ENCODE measurements at regions of chr10 and their contacts with region 1.

Region 1: GRCh38 chr10:69957886-69958555 is 94.6 kb upstream of the MACROH2A2 start:
- DNase-seq: peak; percentile 34
- ATAC-seq: peak; percentile 82
- H3K4me3 Mint-ChIP-seq: no peak overlapping the region
- H3K27ac Mint-ChIP-seq: no peak overlapping the region
- H3K4me1 Mint-ChIP-seq: peaks cover 2% of the 10 kb centered on the region
- H3K27me3 Mint-ChIP-seq: peaks cover 10% of the 10 kb centered on the region
- CTCF ChIP-seq: peak; percentile 60

Region 2: GRCh38 chr10:69703766-69704638 is 254.0 kb before region 1 on chr10:
- CTCF ChIA-PET with region 1: no interaction called
- POLR2A ChIA-PET with region 1: no interaction called
- DNase-seq: no peak
- ATAC-seq: no peak
- H3K4me3 Mint-ChIP-seq: no peak overlapping the region
- H3K27ac Mint-ChIP-seq: no peak overlapping the region
- H3K4me1 Mint-ChIP-seq: 0 out of 2 replicates have a peak, but pooled peaks cover 5% of the 10 kb centered on the region
- H3K27me3 Mint-ChIP-seq: peaks cover 36% of the 10 kb centered on the region
- CTCF ChIP-seq: no peak

Region 3: DNA sequence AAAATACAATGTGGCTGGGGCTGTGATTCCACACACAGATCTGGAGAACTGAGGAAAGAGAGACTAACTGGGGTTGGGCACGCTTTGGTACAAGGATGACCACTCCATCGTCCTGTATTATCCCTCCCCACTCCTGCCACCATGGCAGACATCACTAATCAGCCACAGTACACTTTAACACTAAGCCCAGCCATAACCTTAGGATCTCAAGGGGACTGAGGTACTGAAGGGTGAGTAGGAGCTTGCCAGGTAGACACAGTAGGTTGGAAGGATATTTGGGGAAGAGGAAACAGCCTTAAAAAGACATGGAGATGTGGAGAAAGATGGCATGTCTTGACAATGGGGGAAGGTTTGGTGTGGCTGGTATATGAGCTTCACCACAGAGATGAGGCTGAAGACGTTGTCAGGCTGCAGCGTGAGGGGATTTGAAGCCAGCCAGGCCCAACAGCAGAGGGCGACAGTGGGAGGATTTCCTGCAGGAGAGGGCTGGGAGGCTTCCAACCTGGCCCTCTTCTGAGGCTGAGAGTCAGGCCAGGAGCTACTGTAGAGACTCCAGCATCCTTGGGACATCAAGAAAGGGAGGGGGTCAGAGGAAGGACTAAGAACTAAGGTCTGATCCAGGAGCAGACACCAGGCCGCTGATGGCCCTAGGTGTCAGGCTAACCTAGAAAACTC is 215.0 kb before region 1 on chr10:
- CTCF ChIA-PET with region 1: interaction called, 21 read pairs
- POLR2A ChIA-PET with region 1: no interaction called
- DNase-seq: peak; percentile 79
- ATAC-seq: peak; percentile 92
- H3K4me3 Mint-ChIP-seq: no peak overlapping the region
- H3K27ac Mint-ChIP-seq: no peak overlapping the region
- H3K4me1 Mint-ChIP-seq: 0 out of 2 replicates have a peak, but pooled peaks cover 6% of the 10 kb centered on the region
- H3K27me3 Mint-ChIP-seq: peaks cover 4% of the 10 kb centered on the region
- CTCF ChIP-seq: 0 out of 2 replicates have a peak, but pooled peaks have one; percentile 28

Region 4: DNA sequence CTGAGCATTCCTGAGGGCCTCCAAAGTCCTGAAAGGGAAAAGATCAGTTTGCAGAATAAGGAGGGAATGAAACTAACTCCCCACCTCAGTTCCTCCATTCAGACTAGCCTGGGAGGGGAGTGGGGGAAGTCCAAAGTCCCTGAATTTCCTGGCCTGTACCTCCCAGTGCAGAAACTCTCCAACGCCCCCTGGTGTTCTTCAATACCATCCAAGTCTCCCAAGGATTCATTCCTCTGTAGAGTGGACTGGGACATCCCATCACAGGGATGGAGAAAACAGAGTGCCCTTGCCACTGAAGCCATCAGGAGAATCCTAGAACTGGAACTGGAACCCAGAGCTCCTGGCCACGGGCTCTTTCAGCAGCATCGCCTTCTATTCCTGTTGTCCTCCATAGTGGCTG is 157.9 kb before region 1 on chr10:
- CTCF ChIA-PET with region 1: interaction called, 11 read pairs
- POLR2A ChIA-PET with region 1: no interaction called
- DNase-seq: peak; percentile 72
- ATAC-seq: peak; percentile 58
- H3K4me3 Mint-ChIP-seq: no peak overlapping the region; the same call in 1 of the 2 replicates
- H3K27ac Mint-ChIP-seq: no peak overlapping the region
- H3K4me1 Mint-ChIP-seq: peaks cover 37% of the 10 kb centered on the region
- H3K27me3 Mint-ChIP-seq: peaks cover 74% of the 10 kb centered on the region
- CTCF ChIP-seq: peak; percentile 48; the same call in 1 of the 2 replicates

Region 5: GRCh38 chr10:69885379-69886013 is 72.5 kb before region 1 on chr10:
- CTCF ChIA-PET with region 1: interaction called, 25 read pairs
- POLR2A ChIA-PET with region 1: no interaction called
- DNase-seq: no peak
- ATAC-seq: peak; percentile 48
- H3K4me3 Mint-ChIP-seq: no peak overlapping the region
- H3K27ac Mint-ChIP-seq: no peak overlapping the region
- H3K4me1 Mint-ChIP-seq: peaks cover 16% of the 10 kb centered on the region
- H3K27me3 Mint-ChIP-seq: no peaks in the 10 kb centered on the region; the same call in none of the 2 replicates
- CTCF ChIP-seq: peak; percentile 42; the same call in 1 of the 2 replicates

Region 6: GRCh38 chr10:69941730-69942129 is 16.3 kb before region 1 on chr10:
- CTCF ChIA-PET with region 1: interaction called, 20 read pairs
- POLR2A ChIA-PET with region 1: no interaction called
- DNase-seq: no peak
- ATAC-seq: no peak
- H3K4me3 Mint-ChIP-seq: no peak overlapping the region
- H3K27ac Mint-ChIP-seq: no peak overlapping the region
- H3K4me1 Mint-ChIP-seq: no peaks in the 10 kb centered on the region
- H3K27me3 Mint-ChIP-seq: no peaks in the 10 kb centered on the region; the same call in 1 of the 2 replicates
- CTCF ChIP-seq: no peak

Region 7: GRCh38 chr10:70052462-70053217 is 94.6 kb after region 1 on chr10 and contains the start of gene MACROH2A2:
- CTCF ChIA-PET with region 1: interaction called, 13 read pairs
- POLR2A ChIA-PET with region 1: no interaction called
- DNase-seq: peak; percentile 77
- ATAC-seq: peak; percentile 91
- H3K4me3 Mint-ChIP-seq: peak within 1 kb of the TSS; percentile 77
- H3K27ac Mint-ChIP-seq: no peak within 1 kb of the TSS
- H3K4me1 Mint-ChIP-seq: peaks cover 29% of the 10 kb centered on the region
- H3K27me3 Mint-ChIP-seq: peaks cover 79% of the 10 kb centered on the region
- CTCF ChIP-seq: no peak
- total RNA-seq, gene MACROH2A2: 33.0 to 35.4 TPM (median 33.5 TPM) in 3 replicates

Region 8: DNA sequence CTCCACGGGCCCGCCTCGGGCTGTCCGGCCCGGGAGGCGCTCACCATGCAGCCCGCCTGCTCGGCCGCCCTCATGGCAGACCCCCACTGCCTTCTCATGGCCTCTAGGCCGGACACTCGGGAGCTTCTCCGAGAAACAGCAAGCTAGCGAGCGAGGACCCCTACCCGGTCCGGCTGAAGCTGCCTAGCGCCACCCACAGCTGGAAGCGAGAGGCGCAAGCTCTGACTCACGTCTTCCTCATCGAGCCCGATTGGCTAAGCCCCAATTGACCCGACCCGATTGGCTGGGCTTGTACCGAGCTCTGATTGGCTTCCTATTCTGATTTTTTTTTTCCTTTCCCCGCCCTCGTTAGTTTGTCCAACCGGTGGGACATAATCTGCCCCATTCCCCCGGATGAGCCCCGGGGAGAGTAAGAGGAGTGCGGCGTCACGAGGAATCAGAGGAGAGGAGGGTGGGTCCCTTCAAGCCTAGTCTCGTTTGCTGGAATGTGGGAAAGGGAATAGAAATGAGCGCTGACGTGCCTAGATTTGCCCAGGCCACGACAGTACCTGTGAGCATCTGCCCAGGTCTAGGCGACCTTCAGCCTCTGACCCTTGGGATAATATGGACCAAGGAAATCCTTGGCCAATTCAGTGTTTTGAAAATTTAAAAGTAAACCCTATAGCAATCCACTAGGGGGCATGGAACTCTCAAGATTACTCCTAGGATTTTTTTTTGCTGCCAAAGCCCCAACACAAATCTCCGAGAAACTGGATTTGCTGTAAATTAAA is 188.7 kb after region 1 on chr10 and contains the start of gene TYSND1:
- CTCF ChIA-PET with region 1: interaction called, 32 read pairs
- POLR2A ChIA-PET with region 1: interaction called, 3 read pairs
- DNase-seq: peak; percentile 98
- ATAC-seq: peak; percentile 93
- H3K4me3 Mint-ChIP-seq: peak within 1 kb of the TSS; percentile 78
- H3K27ac Mint-ChIP-seq: peak within 1 kb of the TSS; percentile 96
- H3K4me1 Mint-ChIP-seq: peaks cover 16% of the 10 kb centered on the region
- H3K27me3 Mint-ChIP-seq: no peaks in the 10 kb centered on the region
- CTCF ChIP-seq: peak; percentile 17; the same call in 1 of the 2 replicates
- total RNA-seq, gene TYSND1: 18.9 to 21.3 TPM (median 20.7 TPM) in 3 replicates

Measured in WTC11 (cell line).